SK-N-SH (cell line): ENCODE measurements at regions of chr7 and their contacts with region 1.

Region 1: GRCh38 chr7:45923290-45923689 is 2.2 kb upstream of the IGFBP3 start:
- DNase-seq: peak; percentile 78
- H3K4me3 ChIP-seq: peak overlapping the region in 1 of 2 experiments; percentile 72; a peak in 2 of 4 replicates
- H3K27ac ChIP-seq: peak overlapping the region in 1 of 2 experiments; percentile 18; a peak in 1 of 4 replicates
- H3K4me1 ChIP-seq: peaks cover 26 to 34% of the 10 kb centered on the region in 2 experiments
- H3K27me3 ChIP-seq: no peaks in the 10 kb centered on the region
- CTCF ChIP-seq: peak; percentile 100
- EP300 ChIP-seq: no peak
- RAD21 ChIP-seq: peak; percentile 98

Region 2: GRCh38 chr7:45902820-45903219 is 20.5 kb before region 1 on chr7:
- CTCF ChIA-PET with region 1: interaction called, 34 read pairs
- POLR2A ChIA-PET with region 1: no interaction called
- DNase-seq: no peak
- H3K4me3 ChIP-seq: no peak overlapping the region
- H3K27ac ChIP-seq: no peak overlapping the region
- H3K4me1 ChIP-seq: no peaks in the 10 kb centered on the region
- H3K27me3 ChIP-seq: no peaks in the 10 kb centered on the region; the same call in 1 of the 2 replicates
- CTCF ChIP-seq: peak; percentile 13; the same call in 1 of the 2 replicates
- EP300 ChIP-seq: no peak
- RAD21 ChIP-seq: no peak

Region 3: DNA sequence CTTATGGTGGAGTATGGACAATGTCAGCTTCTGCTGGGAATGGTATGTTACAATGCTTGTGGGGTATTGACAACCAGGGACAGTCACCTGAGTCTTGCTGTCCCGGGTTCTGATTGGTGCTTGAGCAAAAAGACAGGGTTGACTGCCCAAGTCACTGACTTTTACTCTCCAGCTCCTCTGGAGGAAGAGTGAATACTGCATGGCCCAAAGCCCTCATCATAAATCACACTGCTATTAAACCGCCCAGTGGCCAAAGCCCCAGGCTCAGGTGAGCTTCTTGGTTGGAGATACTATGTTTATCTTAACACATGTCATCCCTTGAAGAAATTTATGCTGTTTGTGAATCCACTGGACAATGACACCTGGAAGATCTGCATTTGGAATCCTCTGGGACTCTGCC is 87.8 kb after region 1 on chr7:
- CTCF ChIA-PET with region 1: interaction called, 10 read pairs
- POLR2A ChIA-PET with region 1: no interaction called
- DNase-seq: no peak
- H3K4me3 ChIP-seq: no peak overlapping the region
- H3K27ac ChIP-seq: no peak overlapping the region
- H3K4me1 ChIP-seq: peaks cover 0 to 6% of the 10 kb centered on the region in 2 experiments; a peak in 1 of 4 replicates
- H3K27me3 ChIP-seq: no peaks in the 10 kb centered on the region
- CTCF ChIP-seq: no peak
- EP300 ChIP-seq: no peak
- RAD21 ChIP-seq: no peak

Region 4: DNA sequence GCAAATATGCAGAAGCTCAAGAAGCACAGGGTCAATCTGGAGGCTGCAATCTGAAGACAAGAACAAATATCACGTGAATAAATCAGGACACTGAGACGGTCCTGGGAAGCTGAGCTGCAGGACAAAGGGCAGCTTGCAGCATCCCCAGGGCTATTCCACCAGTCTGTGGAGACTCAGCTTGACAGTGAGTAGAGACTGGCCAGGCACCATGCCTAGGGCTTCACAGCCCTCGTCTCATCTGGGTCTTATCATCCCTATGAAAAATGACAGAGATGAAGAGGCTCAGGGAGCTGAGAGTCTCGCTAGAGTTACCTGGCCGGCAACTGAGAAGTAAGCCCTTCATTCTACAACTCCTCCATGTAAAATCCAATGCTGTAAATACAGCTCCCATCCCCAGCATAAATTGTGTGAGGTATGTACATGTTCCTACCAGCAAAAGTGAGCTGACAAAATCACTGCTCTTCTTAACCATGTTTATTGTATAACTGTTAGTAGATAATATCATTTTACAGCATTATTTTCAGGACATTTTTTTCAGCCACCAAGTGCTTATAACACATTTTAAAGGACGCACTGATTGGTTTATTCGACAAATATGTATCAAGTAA is 184.4 kb after region 1 on chr7:
- CTCF ChIA-PET with region 1: interaction called, 10 read pairs
- POLR2A ChIA-PET with region 1: no interaction called
- DNase-seq: peak; percentile 36
- H3K4me3 ChIP-seq: no peak overlapping the region
- H3K27ac ChIP-seq: no peak overlapping the region
- H3K4me1 ChIP-seq: peaks cover 0 to 13% of the 10 kb centered on the region in 2 experiments; a peak in 2 of 4 replicates
- H3K27me3 ChIP-seq: no peaks in the 10 kb centered on the region
- CTCF ChIP-seq: no peak
- EP300 ChIP-seq: peak in 1 of 2 experiments; percentile 21; a peak in 1 of 4 replicates
- RAD21 ChIP-seq: no peak

Region 5: DNA sequence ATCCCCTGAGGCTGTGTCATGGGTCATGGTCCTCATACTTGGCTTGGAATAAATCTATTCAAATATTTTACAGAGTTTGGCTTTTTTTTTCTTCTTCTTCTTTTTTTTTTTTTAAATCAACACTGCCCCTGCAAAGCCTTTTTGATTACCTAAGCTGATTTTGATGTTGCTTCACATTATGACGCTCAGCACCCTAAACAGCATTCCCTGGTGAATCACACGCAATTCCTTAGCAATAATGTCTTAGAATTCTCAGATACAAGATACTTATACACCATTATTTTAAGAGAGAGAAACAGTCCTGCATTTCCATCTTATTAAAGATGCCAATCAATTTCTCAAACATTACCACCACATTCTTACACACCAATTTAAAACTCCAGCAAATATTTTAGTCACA is 321.5 kb after region 1 on chr7:
- CTCF ChIA-PET with region 1: interaction called, 17 read pairs
- POLR2A ChIA-PET with region 1: no interaction called
- DNase-seq: no peak
- H3K4me3 ChIP-seq: no peak overlapping the region
- H3K27ac ChIP-seq: no peak overlapping the region
- H3K4me1 ChIP-seq: no peaks in the 10 kb centered on the region
- H3K27me3 ChIP-seq: no peaks in the 10 kb centered on the region
- CTCF ChIP-seq: no peak
- EP300 ChIP-seq: no peak
- RAD21 ChIP-seq: no peak

Region 6: GRCh38 chr7:46352004-46352954 is 429.0 kb after region 1 on chr7:
- CTCF ChIA-PET with region 1: interaction called, 109 read pairs
- POLR2A ChIA-PET with region 1: no interaction called
- DNase-seq: peak; percentile 69
- H3K4me3 ChIP-seq: no peak overlapping the region; a peak in 1 of 4 replicates
- H3K27ac ChIP-seq: no peak overlapping the region
- H3K4me1 ChIP-seq: peaks cover 0 to 16% of the 10 kb centered on the region in 2 experiments
- H3K27me3 ChIP-seq: no peaks in the 10 kb centered on the region
- CTCF ChIP-seq: peak; percentile 93
- EP300 ChIP-seq: no peak
- RAD21 ChIP-seq: peak; percentile 96

Region 7: DNA sequence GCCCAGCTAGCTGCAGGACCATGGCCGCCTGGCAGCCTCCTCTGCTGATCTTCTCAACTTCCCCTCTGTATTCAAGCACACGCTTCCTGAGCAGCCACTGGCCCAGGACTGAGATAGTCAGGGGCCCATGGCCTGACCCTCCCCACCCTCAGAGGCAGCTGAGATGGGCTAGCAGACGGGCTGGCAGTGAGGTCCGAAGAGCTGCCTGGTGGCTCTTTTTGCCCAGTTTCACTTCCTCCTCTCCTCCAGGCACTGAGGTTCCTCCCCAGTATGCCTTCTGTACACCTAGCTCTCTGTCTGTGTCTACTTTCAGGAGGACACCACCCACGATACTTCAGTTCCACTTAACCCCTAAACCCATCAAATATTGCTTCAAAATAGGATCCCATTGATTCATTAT is 1263.0 kb after region 1 on chr7:
- CTCF ChIA-PET with region 1: interaction called, 227 read pairs
- POLR2A ChIA-PET with region 1: interaction called, 3 read pairs
- DNase-seq: no peak
- H3K4me3 ChIP-seq: no peak overlapping the region
- H3K27ac ChIP-seq: no peak overlapping the region
- H3K4me1 ChIP-seq: peaks cover 0 to 9% of the 10 kb centered on the region in 2 experiments; a peak in 1 of 4 replicates
- H3K27me3 ChIP-seq: peaks cover 14% of the 10 kb centered on the region; the same call in 1 of the 2 replicates
- CTCF ChIP-seq: no peak
- EP300 ChIP-seq: no peak
- RAD21 ChIP-seq: no peak